WTC11 (cell line): ENCODE measurements at regions of chr14 and their contacts with region 1.

Region 1: DNA sequence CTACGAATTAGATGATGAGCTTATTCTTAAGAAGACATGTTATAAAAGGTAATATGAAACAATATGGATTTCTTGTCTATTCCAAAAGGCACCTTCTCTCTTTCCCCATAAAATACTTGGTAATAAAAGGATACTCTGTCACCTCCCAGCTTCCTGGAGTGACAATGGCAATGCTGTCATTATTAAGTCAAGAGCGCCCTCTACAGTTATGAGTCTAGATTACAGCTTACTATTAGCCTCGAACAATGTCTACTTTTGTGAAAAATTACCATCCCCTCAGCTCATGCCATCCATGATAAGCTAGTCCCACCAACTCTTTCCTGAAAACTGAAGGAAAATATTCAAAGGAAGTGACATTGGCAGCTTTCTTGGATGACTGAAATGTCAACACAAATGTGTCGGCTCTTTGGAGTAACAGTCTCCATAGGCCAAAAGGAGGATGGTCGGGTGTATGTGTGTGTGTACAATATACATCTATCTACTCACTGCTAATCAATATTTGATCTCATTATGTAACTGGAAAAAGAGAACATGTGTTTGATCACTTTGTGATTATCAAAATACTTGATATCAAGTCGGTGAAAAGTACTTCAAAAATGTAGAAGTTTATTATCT is 48.7 kb upstream of the CDKN3 start:
- DNase-seq: no peak
- ATAC-seq: peak; percentile 58
- H3K4me3 Mint-ChIP-seq: no peak overlapping the region
- H3K27ac Mint-ChIP-seq: no peak overlapping the region
- H3K4me1 Mint-ChIP-seq: peaks cover 56% of the 10 kb centered on the region
- H3K27me3 Mint-ChIP-seq: no peaks in the 10 kb centered on the region; the same call in 1 of the 2 replicates
- CTCF ChIP-seq: peak; percentile 85

Region 2: DNA sequence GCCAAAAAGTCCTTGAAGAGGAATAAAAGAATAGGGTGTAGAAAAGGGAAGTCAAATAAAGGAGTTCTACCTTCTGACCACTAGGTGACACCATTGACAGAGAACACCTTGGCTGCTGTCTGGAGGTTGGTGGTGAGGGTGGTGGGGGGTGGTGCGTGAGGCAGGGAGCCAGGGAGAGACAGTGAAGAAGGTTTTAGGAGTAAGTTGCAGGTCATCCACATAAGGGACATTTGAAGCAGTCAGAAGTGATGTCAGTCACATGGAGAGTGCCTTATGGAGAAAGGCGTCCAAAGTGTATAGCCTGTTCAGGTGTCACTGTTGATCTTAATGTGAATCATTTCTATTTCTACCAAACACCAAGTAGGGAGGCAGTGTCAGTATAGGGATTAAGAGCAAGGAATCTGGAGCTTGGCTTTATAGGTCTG is 915.7 kb before region 1 on chr14:
- CTCF ChIA-PET with region 1: interaction called, 14 read pairs
- POLR2A ChIA-PET with region 1: no interaction called
- DNase-seq: peak; percentile 60
- ATAC-seq: peak; percentile 99
- H3K4me3 Mint-ChIP-seq: no peak overlapping the region
- H3K27ac Mint-ChIP-seq: no peak overlapping the region
- H3K4me1 Mint-ChIP-seq: peaks cover 3% of the 10 kb centered on the region; the same call in 1 of the 2 replicates
- H3K27me3 Mint-ChIP-seq: no peaks in the 10 kb centered on the region
- CTCF ChIP-seq: peak; percentile 61

Region 3: DNA sequence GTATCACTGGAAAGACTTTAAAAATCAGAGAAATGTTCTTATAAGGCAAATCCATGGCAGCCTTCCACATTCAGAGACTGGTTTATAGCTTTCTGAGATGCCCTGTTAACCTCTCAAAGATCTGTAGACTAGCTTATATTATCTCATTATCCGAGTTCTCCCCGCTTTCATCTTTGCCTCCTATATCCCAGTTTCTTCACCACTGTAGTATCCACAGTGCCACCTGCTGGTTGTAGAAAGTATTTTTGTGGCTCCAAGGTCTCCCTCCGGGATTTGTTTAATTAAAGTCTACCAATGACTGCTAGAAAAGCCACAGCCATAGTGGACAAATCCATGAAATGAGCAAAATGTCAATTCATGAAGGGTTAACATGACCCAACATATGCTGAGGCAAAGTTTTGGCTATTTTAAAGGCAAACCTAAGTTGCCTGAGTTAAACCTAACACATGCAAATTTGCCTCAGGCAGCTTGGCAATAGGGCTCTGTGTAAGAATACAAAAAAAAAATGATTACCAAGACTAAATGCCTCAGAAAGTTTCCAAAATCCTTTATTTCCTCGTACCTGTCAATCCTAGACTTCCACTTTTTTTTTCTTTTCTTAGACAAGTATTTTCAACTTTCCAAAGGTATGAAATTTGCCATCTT is 172.7 kb before region 1 on chr14:
- CTCF ChIA-PET with region 1: interaction called, 32 read pairs
- POLR2A ChIA-PET with region 1: no interaction called
- DNase-seq: peak; percentile 74
- ATAC-seq: peak; percentile 59
- H3K4me3 Mint-ChIP-seq: no peak overlapping the region
- H3K27ac Mint-ChIP-seq: no peak overlapping the region
- H3K4me1 Mint-ChIP-seq: no peaks in the 10 kb centered on the region
- H3K27me3 Mint-ChIP-seq: no peaks in the 10 kb centered on the region
- CTCF ChIP-seq: peak; percentile 76

Region 4: GRCh38 chr14:54261283-54261682 is 86.8 kb before region 1 on chr14:
- CTCF ChIA-PET with region 1: interaction called, 10 read pairs
- POLR2A ChIA-PET with region 1: no interaction called
- DNase-seq: no peak
- ATAC-seq: no peak; the same call in 1 of the 2 replicates
- H3K4me3 Mint-ChIP-seq: no peak overlapping the region
- H3K27ac Mint-ChIP-seq: peak overlapping the region; percentile 75; the same call in 1 of the 2 replicates
- H3K4me1 Mint-ChIP-seq: peaks cover 32% of the 10 kb centered on the region
- H3K27me3 Mint-ChIP-seq: no peaks in the 10 kb centered on the region
- CTCF ChIP-seq: no peak

Region 5: GRCh38 chr14:54314365-54315104 is 33.6 kb before region 1 on chr14:
- CTCF ChIA-PET with region 1: no interaction called
- POLR2A ChIA-PET with region 1: no interaction called
- DNase-seq: no peak
- ATAC-seq: no peak
- H3K4me3 Mint-ChIP-seq: no peak overlapping the region
- H3K27ac Mint-ChIP-seq: no peak overlapping the region
- H3K4me1 Mint-ChIP-seq: peaks cover 6% of the 10 kb centered on the region; the same call in 1 of the 2 replicates
- H3K27me3 Mint-ChIP-seq: no peaks in the 10 kb centered on the region; the same call in 1 of the 2 replicates
- CTCF ChIP-seq: no peak

Region 6: GRCh38 chr14:54366736-54367735 is 18.9 kb after region 1 on chr14:
- CTCF ChIA-PET with region 1: interaction called, 25 read pairs
- POLR2A ChIA-PET with region 1: no interaction called
- DNase-seq: peak; percentile 46
- ATAC-seq: peak; percentile 82
- H3K4me3 Mint-ChIP-seq: no peak overlapping the region
- H3K27ac Mint-ChIP-seq: peak overlapping the region; percentile 79
- H3K4me1 Mint-ChIP-seq: peaks cover 72% of the 10 kb centered on the region
- H3K27me3 Mint-ChIP-seq: no peaks in the 10 kb centered on the region
- CTCF ChIP-seq: 0 out of 2 replicates have a peak, but pooled peaks have one; percentile 10

Region 7: DNA sequence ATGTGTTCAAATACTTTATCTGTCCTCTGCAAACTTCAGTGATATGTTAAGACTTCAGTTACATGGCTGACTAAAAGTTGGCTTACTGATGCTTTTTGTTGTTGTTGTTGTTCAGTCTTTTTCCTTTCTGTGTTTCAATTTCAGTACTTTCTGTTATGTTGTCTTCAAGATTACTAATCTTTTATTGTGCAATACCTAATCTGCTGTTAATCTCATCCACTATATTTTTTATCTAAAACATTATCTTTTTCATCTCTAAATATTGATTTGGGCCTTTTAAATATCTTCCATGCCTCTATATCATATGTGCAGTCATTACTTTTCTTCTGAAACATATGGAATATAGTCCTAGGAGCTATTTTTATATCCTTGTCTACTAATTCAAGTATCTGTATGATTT is 168.6 kb after region 1 on chr14:
- CTCF ChIA-PET with region 1: no interaction called
- POLR2A ChIA-PET with region 1: no interaction called
- DNase-seq: no peak
- ATAC-seq: no peak
- H3K4me3 Mint-ChIP-seq: no peak overlapping the region
- H3K27ac Mint-ChIP-seq: no peak overlapping the region
- H3K4me1 Mint-ChIP-seq: peaks cover 1% of the 10 kb centered on the region; the same call in 1 of the 2 replicates
- H3K27me3 Mint-ChIP-seq: no peaks in the 10 kb centered on the region
- CTCF ChIP-seq: no peak